Motor neuron (in vitro differentiated cells): ENCODE measurements at regions of chr17 and their contacts with region 1.

Region 1: GRCh38 chr17:72725433-72726068 is 366.9 kb downstream of the SLC39A11 start:
- ATAC-seq: peak; percentile 71 to 85 (median 81)
- H3K4me3 ChIP-seq: no peak overlapping the region
- H3K27ac ChIP-seq: no peak overlapping the region
- H3K4me1 ChIP-seq: peaks cover 12 to 14% of the 10 kb centered on the region in 2 donors

Region 2: DNA sequence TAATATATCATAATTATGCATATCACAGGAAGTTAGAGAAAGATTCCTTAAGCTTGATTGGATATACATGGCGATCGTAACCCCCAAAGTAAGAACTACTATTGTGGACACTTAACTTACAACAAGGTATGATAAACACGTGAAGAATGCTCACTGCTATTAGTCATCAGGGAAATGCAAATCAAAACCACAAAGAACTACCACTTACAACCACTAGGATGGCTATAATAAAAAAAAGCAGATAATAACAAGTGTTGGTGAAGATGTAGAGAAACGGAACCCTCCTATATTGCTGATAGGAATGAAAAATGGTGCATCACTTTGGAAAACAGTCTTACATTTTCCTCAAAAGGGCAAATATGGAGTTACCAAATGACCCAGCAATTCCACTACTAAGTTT is 101.1 kb after region 1 on chr17:
- in situ Hi-C with region 1: loop called in 1 of 9 experiments (anchors 25 kb)
- ATAC-seq: peak in 2 of 8 experiments; percentile 38 to 48
- H3K4me3 ChIP-seq: no peak overlapping the region
- H3K27ac ChIP-seq: no peak overlapping the region
- H3K4me1 ChIP-seq: no peaks in the 10 kb centered on the region

Region 3: GRCh38 chr17:72931163-72931562 is 205.6 kb after region 1 on chr17:
- in situ Hi-C with region 1: loop called in 1 of 9 experiments (anchors 25 kb)
- ATAC-seq: peak in 3 of 8 experiments; percentile 24 to 63 (median 45)
- H3K4me3 ChIP-seq: no peak overlapping the region
- H3K27ac ChIP-seq: no peak overlapping the region
- H3K4me1 ChIP-seq: peaks cover 3 to 11% of the 10 kb centered on the region in 2 donors

Region 4: DNA sequence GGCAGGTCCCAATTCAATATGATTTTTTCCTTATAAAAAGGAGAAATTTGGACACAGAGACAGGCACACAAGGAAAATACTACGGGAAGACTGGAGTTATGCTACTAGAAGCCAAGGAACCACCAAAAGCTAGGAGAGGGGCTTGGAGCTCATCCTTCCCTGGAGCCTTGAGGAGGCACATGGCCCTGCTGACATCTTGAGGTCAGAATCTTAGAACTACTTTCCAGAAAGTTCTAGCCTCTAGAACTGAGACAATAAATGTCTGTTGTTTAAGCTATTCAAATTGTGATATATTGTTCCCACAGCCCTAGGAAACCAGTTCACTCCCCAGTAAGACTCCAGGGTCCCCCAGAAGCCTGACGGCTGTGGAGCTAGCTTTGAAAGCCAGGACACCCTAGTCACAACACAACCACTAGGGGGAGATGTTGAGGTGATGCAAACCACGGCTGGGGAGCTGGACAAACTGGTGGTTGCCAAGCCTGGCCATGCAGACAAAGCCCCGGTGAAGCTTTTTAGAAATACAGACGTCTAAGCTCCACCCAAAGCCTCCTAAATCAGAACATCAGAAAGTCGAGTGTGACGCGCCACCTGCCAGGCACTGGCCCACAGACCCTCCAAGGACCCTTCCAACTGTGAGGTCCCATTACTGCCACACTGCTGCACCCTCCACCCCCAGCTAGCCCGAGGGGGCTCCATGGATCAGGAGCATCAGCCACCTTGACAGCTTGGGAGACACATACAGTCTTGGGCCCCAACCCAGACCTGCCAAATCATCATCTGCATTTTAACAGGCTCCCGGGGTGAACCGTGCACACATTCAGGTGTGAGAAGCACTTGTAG is 260.6 kb after region 1 on chr17:
- in situ Hi-C with region 1: loop called in 1 of 9 experiments (anchors 10 kb)
- ATAC-seq: peak in 4 of 8 experiments; percentile 37 to 94 (median 76)
- H3K4me3 ChIP-seq: no peak overlapping the region
- H3K27ac ChIP-seq: no peak overlapping the region
- H3K4me1 ChIP-seq: no peaks in the 10 kb centered on the region

Region 5: DNA sequence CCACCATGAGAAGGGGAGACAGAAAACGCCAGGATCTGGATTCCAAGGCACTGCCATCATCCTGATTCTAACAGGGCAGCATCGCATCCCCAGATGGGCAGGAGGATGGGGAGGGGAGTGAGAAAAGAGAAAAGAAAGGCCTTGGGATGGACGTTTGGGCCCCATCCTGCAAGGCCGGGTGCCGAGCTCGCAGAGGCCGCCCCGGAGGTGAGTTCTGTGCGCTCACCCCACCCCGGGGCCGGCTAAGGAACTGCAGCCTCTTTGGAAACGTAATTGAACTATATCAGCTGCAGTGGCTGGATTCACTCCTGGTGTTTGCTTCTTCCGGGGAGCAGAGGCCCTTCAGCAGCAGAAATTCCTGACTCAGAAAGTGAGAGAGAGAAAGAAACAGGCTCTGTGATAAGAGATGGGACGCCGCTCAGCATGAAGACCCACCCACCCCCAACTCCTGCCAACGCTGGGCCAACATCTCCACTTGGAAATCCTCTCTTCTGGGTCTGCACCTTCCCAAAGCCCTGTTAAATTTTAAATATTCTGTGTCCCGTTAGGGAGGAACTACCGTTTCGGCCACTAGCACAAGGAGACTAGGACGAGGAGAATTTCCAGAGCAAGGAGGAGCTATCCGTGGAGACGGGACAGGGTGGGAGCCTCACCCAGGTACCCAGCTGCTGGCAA is 430.8 kb after region 1 on chr17:
- in situ Hi-C with region 1: loop called in 1 of 9 experiments (anchors 25 kb)
- ATAC-seq: peak; percentile 93 to 99 (median 97)
- H3K4me3 ChIP-seq: no peak overlapping the region
- H3K27ac ChIP-seq: no peak overlapping the region
- H3K4me1 ChIP-seq: peaks cover 15 to 20% of the 10 kb centered on the region in 2 donors

Region 6: GRCh38 chr17:73192894-73193701 is 467.5 kb after region 1 on chr17 and contains the start of gene COG1:
- in situ Hi-C with region 1: loop called in 8 of 9 experiments (anchors 10 to 25 kb)
- ATAC-seq: peak; percentile 72 to 87 (median 82)
- H3K4me3 ChIP-seq: peak within 1 kb of the TSS; percentile 61 to 100 (median 95)
- H3K27ac ChIP-seq: peak within 1 kb of the TSS; percentile 91 to 97
- H3K4me1 ChIP-seq: peaks cover 3 to 9% of the 10 kb centered on the region in 2 donors
- total RNA-seq, gene COG1: 25.7 to 44.0 (median 36.0) TPM

Region 7: DNA sequence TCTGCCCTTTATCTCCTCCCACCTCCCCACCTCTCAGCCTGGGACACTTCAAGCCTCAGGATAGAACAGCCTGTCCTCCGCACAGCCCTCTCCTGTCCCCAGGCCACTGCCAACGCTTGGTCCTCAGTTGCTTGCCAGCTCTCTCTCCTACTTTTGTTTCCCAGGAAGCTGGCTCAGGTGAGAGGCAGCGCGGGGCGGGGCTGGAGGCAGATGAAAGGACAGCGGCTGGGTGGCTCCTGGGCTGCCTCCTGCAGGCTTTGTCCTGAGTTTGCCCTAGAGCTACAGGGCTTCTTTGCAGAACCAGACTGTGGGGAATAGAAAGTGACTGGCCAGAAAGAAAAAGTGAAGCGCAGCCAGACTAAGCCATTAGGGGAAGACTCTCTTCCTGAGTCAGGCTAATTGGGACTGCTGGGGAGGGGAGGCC is 634.4 kb after region 1 on chr17:
- in situ Hi-C with region 1: loop called in 4 of 9 experiments (anchors 25 kb)
- ATAC-seq: no peak
- H3K4me3 ChIP-seq: no peak overlapping the region
- H3K27ac ChIP-seq: no peak overlapping the region
- H3K4me1 ChIP-seq: peaks cover 32 to 35% of the 10 kb centered on the region in 2 donors